ENCODE measurements at regions of chr15 and their contacts with region 1.

Region 1: GRCh38 chr15:52749258-52749657 is 40.9 kb downstream of the ONECUT1 start:
- DNase-seq: no peak
- ATAC-seq: no peak
- H3K4me3 ChIP-seq: no peak overlapping the region
- H3K4me3 Mint-ChIP-seq: no peak overlapping the region
- H3K27ac ChIP-seq: no peak overlapping the region
- H3K27ac Mint-ChIP-seq: no peak overlapping the region
- H3K4me1 ChIP-seq: no peaks in the 10 kb centered on the region
- H3K4me1 Mint-ChIP-seq: peaks cover 0 to 2% (median 0%) of the 10 kb centered on the region in 3 donors
- H3K27me3 ChIP-seq: peaks cover 3 to 19% of the 10 kb centered on the region in 2 experiments
- H3K27me3 Mint-ChIP-seq: peaks cover 36 to 37% of the 10 kb centered on the region in 2 donors

Region 2: DNA sequence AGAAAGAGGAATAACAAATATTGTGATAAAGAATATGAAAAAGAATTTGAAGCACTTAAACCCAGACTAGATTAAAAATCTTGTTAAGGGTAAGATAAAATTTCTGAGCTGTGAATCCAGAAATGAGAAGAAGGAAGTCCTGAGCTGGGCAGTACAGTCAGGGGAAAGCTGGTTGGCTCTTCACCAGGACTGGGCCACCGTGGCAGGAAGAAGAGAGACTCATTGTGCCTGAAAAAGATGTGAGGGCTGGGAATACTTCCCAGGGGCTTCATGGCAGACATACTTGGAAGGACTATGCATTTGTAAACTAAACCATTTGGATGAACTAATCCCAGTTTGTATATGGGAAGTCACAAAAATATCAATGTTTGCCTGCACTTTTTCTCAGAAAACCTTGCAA is 425.1 kb before region 1 on chr15:
- CTCF ChIA-PET with region 1: interaction called in 1 of 2 experiments, 4 read pairs
- POLR2A ChIA-PET with region 1: interaction called in 1 of 2 experiments, 10 read pairs
- DNase-seq: no peak
- ATAC-seq: no peak
- H3K4me3 ChIP-seq: no peak overlapping the region
- H3K4me3 Mint-ChIP-seq: no peak overlapping the region
- H3K27ac ChIP-seq: no peak overlapping the region
- H3K27ac Mint-ChIP-seq: no peak overlapping the region
- H3K4me1 ChIP-seq: no peaks in the 10 kb centered on the region
- H3K4me1 Mint-ChIP-seq: no peaks in the 10 kb centered on the region
- H3K27me3 ChIP-seq: no peaks in the 10 kb centered on the region
- H3K27me3 Mint-ChIP-seq: no peaks in the 10 kb centered on the region

Region 3: DNA sequence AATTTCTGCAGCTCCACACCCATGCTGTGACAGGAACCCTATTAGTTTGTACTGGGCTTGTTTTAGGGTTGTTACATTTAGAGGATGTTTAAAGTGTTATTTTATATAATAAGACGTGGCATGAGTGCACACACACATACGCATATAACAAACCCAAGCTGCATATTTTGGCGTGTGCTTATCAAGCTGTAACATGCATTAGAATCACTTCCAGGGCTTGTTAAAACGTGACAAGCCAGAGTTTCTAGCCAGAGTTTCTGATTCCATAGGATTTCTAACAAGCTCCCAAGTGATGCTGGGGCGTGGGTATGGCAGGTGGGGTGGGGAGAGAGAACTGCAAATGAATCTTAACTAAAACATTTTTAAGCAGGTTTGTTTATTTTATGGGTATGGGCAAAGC is 23.5 kb after region 1 on chr15:
- CTCF ChIA-PET with region 1: interaction called in 1 of 2 experiments, 11 read pairs
- POLR2A ChIA-PET with region 1: no interaction called
- DNase-seq: no peak
- ATAC-seq: no peak
- H3K4me3 ChIP-seq: no peak overlapping the region
- H3K4me3 Mint-ChIP-seq: no peak overlapping the region
- H3K27ac ChIP-seq: no peak overlapping the region
- H3K27ac Mint-ChIP-seq: no peak overlapping the region
- H3K4me1 ChIP-seq: no peaks in the 10 kb centered on the region
- H3K4me1 Mint-ChIP-seq: no peaks in the 10 kb centered on the region
- H3K27me3 ChIP-seq: peaks cover 6 to 14% of the 10 kb centered on the region in 2 experiments
- H3K27me3 Mint-ChIP-seq: peaks cover 54 to 57% of the 10 kb centered on the region in 2 donors

Region 4: DNA sequence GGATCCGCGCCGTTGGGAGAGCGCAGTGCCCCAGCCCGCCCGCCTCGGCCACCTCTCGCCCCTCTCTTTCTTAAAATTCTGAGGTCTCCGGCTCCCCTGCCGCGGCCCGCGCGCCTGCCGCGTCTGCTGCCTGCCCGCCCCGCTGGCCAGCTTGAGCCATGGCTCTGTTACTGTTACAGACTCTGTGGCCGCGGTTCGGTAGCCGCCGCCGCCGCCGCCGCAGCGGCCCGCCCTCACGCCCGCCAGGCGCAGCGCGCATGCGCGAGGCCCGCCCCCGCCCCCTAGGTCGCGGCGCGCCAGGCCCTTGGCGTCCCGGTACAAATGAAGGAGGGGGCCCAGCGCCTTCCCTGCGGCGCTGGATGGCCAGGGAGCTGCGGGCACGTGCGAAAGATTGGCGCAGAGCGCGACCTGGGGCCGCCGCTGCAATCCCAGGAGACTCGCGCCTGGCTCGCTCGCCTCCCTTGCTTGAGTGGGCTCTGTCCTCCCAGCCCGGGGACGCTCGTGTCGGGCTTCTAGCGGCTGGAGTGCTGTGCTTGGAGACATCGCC is 41.0 kb after region 1 on chr15 and contains the start of gene ONECUT1:
- CTCF ChIA-PET with region 1: no interaction called
- POLR2A ChIA-PET with region 1: no interaction called
- DNase-seq: peak in 7 of 35 experiments; percentile 28 to 58 (median 49)
- ATAC-seq: peak; percentile 35 to 65 (median 58)
- H3K4me3 ChIP-seq: peak within 1 kb of the TSS; percentile 42 to 77
- H3K4me3 Mint-ChIP-seq: peak within 1 kb of the TSS; percentile 60 to 69 (median 66)
- H3K27ac ChIP-seq: no peak within 1 kb of the TSS
- H3K27ac Mint-ChIP-seq: no peak within 1 kb of the TSS
- H3K4me1 ChIP-seq: peaks cover 8 to 53% of the 10 kb centered on the region in 2 experiments
- H3K4me1 Mint-ChIP-seq: peaks cover 17 to 37% (median 35%) of the 10 kb centered on the region in 3 donors
- H3K27me3 ChIP-seq: peaks cover 22 to 84% of the 10 kb centered on the region in 2 experiments
- H3K27me3 Mint-ChIP-seq: peaks cover 60 to 82% of the 10 kb centered on the region in 2 donors
- total RNA-seq, gene ONECUT1: 0.13 TPM in 1 of 5 donors, not detected in the others

Measured in T-cell (primary cell).